ENCODE measurements at regions of chr12 and their contacts with region 1.

Region 1: GRCh38 chr12:49707128-49707811 is at the start of gene FMNL3:
- DNase-seq: peak; percentile 97
- H3K4me3 ChIP-seq: peak within 1 kb of the TSS; percentile 88 to 96 (median 93)
- H3K27ac ChIP-seq: peak within 1 kb of the TSS; percentile 85
- H3K4me1 ChIP-seq: peaks cover 36% of the 10 kb centered on the region
- H3K27me3 ChIP-seq: peaks cover 18 to 21% of the 10 kb centered on the region in 2 experiments
- CTCF ChIP-seq: peak; percentile 90 to 93
- POLR2A ChIP-seq: peak; percentile 23
- total RNA-seq, gene FMNL3: 93.2 and 93.3 TPM in 2 replicates

Region 2: GRCh38 chr12:49567611-49568441 is 139.4 kb before region 1 on chr12 and contains the start of gene MCRS1:
- CTCF ChIA-PET with region 1: no interaction called
- POLR2A ChIA-PET with region 1: no interaction called
- dilution Hi-C with region 1: no loop called
- intact Hi-C with region 1: loop called (anchors 2 kb)
- DNase-seq: peak; percentile 94
- H3K4me3 ChIP-seq: peak within 1 kb of the TSS; percentile 64 to 86 (median 82)
- H3K27ac ChIP-seq: peak within 1 kb of the TSS; percentile 80
- H3K4me1 ChIP-seq: peaks cover 14% of the 10 kb centered on the region
- H3K27me3 ChIP-seq: no peaks in the 10 kb centered on the region
- CTCF ChIP-seq: no peak
- POLR2A ChIP-seq: peak; percentile 96
- total RNA-seq, gene MCRS1: 71.1 and 78.5 TPM in 2 replicates

Region 3: DNA sequence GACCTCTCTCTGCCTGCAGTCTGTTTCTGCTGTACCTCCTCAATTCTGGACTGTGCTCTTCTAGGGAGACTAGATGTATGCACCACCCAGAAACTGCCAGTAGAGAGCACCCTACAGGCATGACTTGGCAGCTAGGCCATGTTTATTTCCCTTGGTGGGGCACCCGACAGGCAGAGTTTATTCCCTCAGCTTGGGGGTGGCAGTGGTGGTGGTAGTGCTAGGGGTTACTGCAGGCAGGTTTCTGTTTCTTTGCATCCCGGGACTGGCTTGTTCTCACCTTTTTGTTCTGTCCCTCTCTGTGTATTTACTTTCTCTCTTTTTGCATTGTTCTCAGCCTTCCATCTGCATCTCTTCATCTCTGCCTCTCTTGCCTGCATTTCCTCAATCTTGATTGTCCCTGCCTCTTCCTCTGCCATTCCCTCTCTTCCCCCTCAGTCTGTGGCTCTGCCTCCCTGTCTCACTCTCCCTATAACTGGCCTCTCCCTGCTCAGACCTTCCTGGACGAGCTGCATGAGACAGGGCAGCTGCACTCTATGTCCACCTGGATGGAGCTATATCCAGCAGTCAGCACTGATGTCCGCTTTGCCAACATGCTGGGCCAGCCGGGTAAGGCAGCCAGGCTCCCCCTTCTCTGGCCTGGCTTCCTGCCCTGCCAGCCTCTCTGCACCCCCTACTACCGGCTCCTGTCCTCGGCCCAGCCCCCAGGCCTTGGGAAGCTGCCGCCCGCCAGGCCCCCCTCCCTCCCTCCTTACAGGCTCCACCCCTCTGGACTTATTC is 70.1 kb before region 1 on chr12:
- CTCF ChIA-PET with region 1: interaction called, 93 read pairs
- POLR2A ChIA-PET with region 1: interaction called, 4 read pairs
- dilution Hi-C with region 1: no loop called
- intact Hi-C with region 1: loop called (anchors 1 kb)
- DNase-seq: peak; percentile 76
- H3K4me3 ChIP-seq: no peak overlapping the region
- H3K27ac ChIP-seq: peak overlapping the region; percentile 48
- H3K4me1 ChIP-seq: peaks cover 12% of the 10 kb centered on the region
- H3K27me3 ChIP-seq: no peaks in the 10 kb centered on the region
- CTCF ChIP-seq: peak; percentile 73 to 76
- POLR2A ChIP-seq: no peak

Region 4: GRCh38 chr12:49644620-49644994 is 62.7 kb before region 1 on chr12:
- CTCF ChIA-PET with region 1: interaction called, 93 read pairs
- POLR2A ChIA-PET with region 1: interaction called, 21 read pairs
- dilution Hi-C with region 1: no loop called
- intact Hi-C with region 1: loop called (anchors 1 kb)
- DNase-seq: peak; percentile 69
- H3K4me3 ChIP-seq: no peak overlapping the region
- H3K27ac ChIP-seq: peak overlapping the region; percentile 26
- H3K4me1 ChIP-seq: peaks cover 31% of the 10 kb centered on the region
- H3K27me3 ChIP-seq: no peaks in the 10 kb centered on the region
- CTCF ChIP-seq: peak; percentile 91 to 92
- POLR2A ChIP-seq: no peak

Region 5: GRCh38 chr12:49655595-49656236 is 51.6 kb before region 1 on chr12:
- CTCF ChIA-PET with region 1: interaction called, 10 read pairs
- POLR2A ChIA-PET with region 1: interaction called, 6 read pairs
- dilution Hi-C with region 1: no loop called
- intact Hi-C with region 1: no loop called
- DNase-seq: peak; percentile 84
- H3K4me3 ChIP-seq: no peak overlapping the region
- H3K27ac ChIP-seq: peak overlapping the region; percentile 82
- H3K4me1 ChIP-seq: peaks cover 21% of the 10 kb centered on the region
- H3K27me3 ChIP-seq: no peaks in the 10 kb centered on the region
- CTCF ChIP-seq: no peak
- POLR2A ChIP-seq: no peak

Region 6: DNA sequence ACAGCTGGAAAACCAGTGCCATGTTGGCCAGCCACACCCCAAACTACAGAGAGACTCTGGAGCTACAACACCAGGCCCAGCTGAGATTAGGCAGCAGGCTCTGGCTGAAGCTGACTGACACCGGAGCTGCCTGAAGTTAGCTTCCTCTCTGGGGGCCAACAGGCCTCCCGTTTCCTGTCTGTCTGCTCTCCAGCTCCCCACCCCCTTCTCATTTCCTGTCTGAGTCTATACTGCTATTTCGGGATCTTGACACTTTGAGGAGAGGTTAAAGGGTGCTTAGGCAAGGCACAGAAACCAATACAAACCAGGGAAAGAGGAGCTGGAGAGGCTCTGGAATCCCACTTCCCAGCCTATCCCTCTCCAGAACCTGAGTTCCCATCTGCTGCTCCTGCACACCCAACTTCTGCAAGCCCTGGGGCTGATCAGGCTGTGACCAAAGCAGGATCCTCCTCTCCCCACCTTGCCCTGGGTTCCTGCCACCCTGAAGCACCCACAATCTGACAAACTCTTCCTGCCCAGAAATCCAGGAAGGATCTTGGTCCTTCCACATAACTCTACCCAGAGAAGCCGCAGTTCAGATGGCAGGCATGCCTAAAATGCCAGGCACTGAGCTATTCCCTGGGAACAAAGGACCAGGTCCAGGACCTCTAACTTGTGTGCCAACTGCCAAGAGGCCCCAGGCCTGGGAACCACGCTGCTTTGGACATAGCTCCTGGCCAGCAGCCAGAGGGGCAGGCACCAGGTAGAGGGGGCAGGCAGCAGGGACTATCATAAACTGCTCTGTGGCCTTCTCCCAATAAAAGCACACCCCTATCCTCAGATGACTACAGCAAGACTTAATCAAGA is 44.0 kb before region 1 on chr12:
- CTCF ChIA-PET with region 1: interaction called, 43 read pairs
- POLR2A ChIA-PET with region 1: interaction called, 16 read pairs
- dilution Hi-C with region 1: no loop called
- intact Hi-C with region 1: loop called (anchors 1 kb)
- DNase-seq: peak; percentile 95
- H3K4me3 ChIP-seq: peak overlapping the region in 1 of 3 experiments; percentile 12
- H3K27ac ChIP-seq: peak overlapping the region; percentile 100
- H3K4me1 ChIP-seq: peaks cover 48% of the 10 kb centered on the region
- H3K27me3 ChIP-seq: no peaks in the 10 kb centered on the region
- CTCF ChIP-seq: no peak
- POLR2A ChIP-seq: no peak

Measured in endothelial cell of umbilical vein (primary cell).